ENCODE measurements at regions of chr10 and their contacts with region 1.

Region 1: DNA sequence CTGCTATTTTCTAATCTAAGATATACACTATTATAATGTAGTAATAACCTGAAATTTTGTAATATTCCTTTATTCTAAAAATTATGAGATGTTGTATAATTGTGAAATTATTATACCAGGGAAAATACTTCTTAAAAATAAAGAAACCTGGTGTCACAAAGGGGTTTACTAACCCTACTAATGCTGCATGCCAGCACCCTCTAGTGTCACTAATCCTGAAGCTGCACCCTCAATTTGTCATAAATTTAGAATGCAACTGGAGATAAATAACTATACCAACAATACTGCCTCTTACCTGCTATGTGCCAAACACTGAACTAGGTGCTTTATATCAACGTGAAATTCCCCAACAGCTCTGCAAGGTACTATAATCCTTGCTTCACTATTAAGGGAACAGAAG is 30.8 kb downstream of the TM9SF3 start:
- DNase-seq: peak in 2 of 4 experiments; percentile 5 to 22
- ATAC-seq: peak; percentile 59; the same call in 2 of the 3 replicates
- H3K4me3 ChIP-seq: no peak overlapping the region
- H3K27ac ChIP-seq: no peak overlapping the region
- H3K4me1 ChIP-seq: no peaks in the 10 kb centered on the region; a peak in 1 of 5 replicates
- H3K27me3 ChIP-seq: no peaks in the 10 kb centered on the region
- CTCF ChIP-seq: peak; percentile 23 to 54 (median 35); a peak in 4 of 6 replicates
- EP300 ChIP-seq: no peak
- POLR2A ChIP-seq: no peak
- RAD21 ChIP-seq: peak in 1 of 2 experiments; percentile 40; a peak in 2 of 4 replicates

Region 2: GRCh38 chr10:96395931-96396877 is 159.8 kb before region 1 on chr10:
- CTCF ChIA-PET with region 1: no interaction called
- POLR2A ChIA-PET with region 1: no interaction called
- in situ Hi-C with region 1: no loop called
- intact Hi-C with region 1: loop called (anchors 5 kb)
- DNase-seq: peak; percentile 70 to 76 (median 74)
- ATAC-seq: peak; percentile 95
- H3K4me3 ChIP-seq: no peak overlapping the region
- H3K27ac ChIP-seq: no peak overlapping the region
- H3K4me1 ChIP-seq: no peaks in the 10 kb centered on the region
- H3K27me3 ChIP-seq: peaks cover 10 to 28% of the 10 kb centered on the region in 2 experiments; a peak in 3 of 5 replicates
- CTCF ChIP-seq: peak; percentile 69 to 82 (median 80)
- EP300 ChIP-seq: no peak
- POLR2A ChIP-seq: no peak
- RAD21 ChIP-seq: peak; percentile 54 to 70

Measured in K562 (cell line).